Naive thymus-derived CD4-positive, alpha-beta T cell (primary cell): ENCODE measurements at regions of chr4 and their contacts with region 1.

Region 1: GRCh38 chr4:83217721-83218522 is 66.7 kb downstream of the COQ2 start:
- DNase-seq: peak in 8 of 9 donors; percentile 52 to 91 (median 84)
- ATAC-seq: peak; percentile 95
- H3K4me3 ChIP-seq: peak overlapping the region; percentile 23
- H3K4me3 Mint-ChIP-seq: peak overlapping the region; percentile 57 to 84 (median 72)
- H3K27ac ChIP-seq: peak overlapping the region; percentile 78
- H3K27ac Mint-ChIP-seq: peak overlapping the region; percentile 88 to 96 (median 92)
- H3K4me1 ChIP-seq: peaks cover 65 to 77% of the 10 kb centered on the region in 2 donors
- H3K4me1 Mint-ChIP-seq: peaks cover 56 to 83% (median 74%) of the 10 kb centered on the region in 7 donors
- H3K27me3 ChIP-seq: no peaks in the 10 kb centered on the region
- H3K27me3 Mint-ChIP-seq: no peaks in the 10 kb centered on the region

Region 2: GRCh38 chr4:81913427-81913879 is 1304.5 kb before region 1 on chr4:
- CTCF ChIA-PET with region 1: no interaction called
- POLR2A ChIA-PET with region 1: no interaction called
- intact Hi-C with region 1: no loop called
- DNase-seq: peak; percentile 18 to 64 (median 58)
- ATAC-seq: peak; percentile 81
- H3K4me3 ChIP-seq: no peak overlapping the region
- H3K4me3 Mint-ChIP-seq: peak overlapping the region in 1 of 10 donors; percentile 4
- H3K27ac ChIP-seq: no peak overlapping the region
- H3K27ac Mint-ChIP-seq: no peak overlapping the region
- H3K4me1 ChIP-seq: no peaks in the 10 kb centered on the region
- H3K4me1 Mint-ChIP-seq: peaks cover 0 to 9% (median 8%) of the 10 kb centered on the region in 7 donors
- H3K27me3 ChIP-seq: no peaks in the 10 kb centered on the region
- H3K27me3 Mint-ChIP-seq: peaks cover 0 to 20% (median 7%) of the 10 kb centered on the region in 5 donors

Region 3: DNA sequence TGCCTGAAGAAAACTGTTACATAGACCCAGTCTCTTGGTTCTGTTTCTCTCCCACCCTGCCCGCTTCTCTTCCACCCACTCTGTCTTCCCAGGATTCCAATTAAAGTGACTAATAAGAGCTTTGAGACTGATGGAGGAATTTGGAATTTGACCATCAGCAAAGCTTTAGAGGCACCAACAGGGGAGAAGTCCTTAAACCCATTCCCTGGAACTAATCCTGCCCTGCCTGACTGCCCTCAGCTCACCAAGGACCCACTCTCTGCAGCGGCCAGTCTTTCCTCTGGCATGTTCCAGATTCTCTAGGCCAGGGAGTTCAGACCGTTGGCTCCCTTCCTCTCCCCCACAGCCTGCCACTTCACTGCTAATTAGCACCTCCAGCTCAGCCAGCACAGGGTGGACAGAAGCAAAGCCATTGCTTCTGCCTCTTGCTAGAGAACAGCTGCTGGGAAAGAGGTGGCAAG is 443.2 kb before region 1 on chr4:
- CTCF ChIA-PET with region 1: no interaction called
- POLR2A ChIA-PET with region 1: no interaction called
- intact Hi-C with region 1: no loop called
- DNase-seq: no peak
- ATAC-seq: no peak
- H3K4me3 ChIP-seq: no peak overlapping the region
- H3K4me3 Mint-ChIP-seq: no peak overlapping the region
- H3K27ac ChIP-seq: no peak overlapping the region
- H3K27ac Mint-ChIP-seq: no peak overlapping the region
- H3K4me1 ChIP-seq: no peaks in the 10 kb centered on the region
- H3K4me1 Mint-ChIP-seq: no peaks in the 10 kb centered on the region
- H3K27me3 ChIP-seq: no peaks in the 10 kb centered on the region
- H3K27me3 Mint-ChIP-seq: peaks cover 0 to 14% (median 6%) of the 10 kb centered on the region in 5 donors

Region 4: GRCh38 chr4:83034630-83035494 is 183.1 kb before region 1 on chr4 and contains the start of gene COPS4:
- CTCF ChIA-PET with region 1: no interaction called
- POLR2A ChIA-PET with region 1: no interaction called
- intact Hi-C with region 1: loop called in 1 of 2 experiments (anchors 1 kb)
- DNase-seq: peak; percentile 77 to 98 (median 97)
- ATAC-seq: peak; percentile 99
- H3K4me3 ChIP-seq: peak within 1 kb of the TSS; percentile 98
- H3K4me3 Mint-ChIP-seq: peak within 1 kb of the TSS; percentile 92 to 100 (median 98)
- H3K27ac ChIP-seq: peak within 1 kb of the TSS; percentile 94
- H3K27ac Mint-ChIP-seq: peak within 1 kb of the TSS; percentile 94 to 100 (median 97)
- H3K4me1 ChIP-seq: peaks cover 4 to 19% of the 10 kb centered on the region in 2 donors
- H3K4me1 Mint-ChIP-seq: peaks cover 19 to 44% (median 35%) of the 10 kb centered on the region in 7 donors
- H3K27me3 ChIP-seq: no peaks in the 10 kb centered on the region
- H3K27me3 Mint-ChIP-seq: no peaks in the 10 kb centered on the region
- total RNA-seq, gene COPS4: 23.5 to 32.8 (median 24.7) TPM

Region 5: DNA sequence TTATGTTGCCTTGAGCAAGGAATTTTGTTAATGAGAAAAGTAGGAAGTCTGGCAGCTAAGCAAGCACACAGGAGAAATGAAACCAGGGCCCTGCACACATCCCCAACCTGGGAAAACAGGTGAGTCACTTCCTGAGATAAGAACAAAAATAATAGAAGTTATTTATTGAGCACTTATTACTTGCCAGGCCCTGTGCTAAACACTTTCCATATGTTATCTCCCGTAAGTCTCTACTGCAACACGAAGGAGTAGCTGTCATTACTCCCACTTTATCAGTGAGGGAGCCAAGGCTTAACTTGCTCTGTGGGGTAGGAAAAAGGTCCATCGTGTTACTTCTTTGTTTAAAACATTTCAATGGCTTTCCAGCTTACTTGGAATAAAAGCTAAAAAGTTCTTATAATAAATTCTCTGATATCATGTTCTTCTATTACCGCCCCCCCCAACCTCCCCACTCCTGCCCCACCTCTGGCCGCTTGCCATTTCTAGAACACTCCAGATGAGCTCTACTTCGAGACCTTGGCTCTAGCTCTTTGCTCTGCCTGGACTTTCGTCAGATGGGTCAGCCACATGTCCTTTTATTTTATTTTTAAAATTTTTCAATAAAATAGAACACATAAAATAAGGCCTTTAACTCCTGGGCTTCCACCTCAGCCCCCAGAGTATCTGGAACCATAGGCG is 67.1 kb before region 1 on chr4:
- CTCF ChIA-PET with region 1: no interaction called
- POLR2A ChIA-PET with region 1: no interaction called
- intact Hi-C with region 1: loop called in 1 of 2 experiments (anchors 5 kb)
- DNase-seq: no peak
- ATAC-seq: no peak
- H3K4me3 ChIP-seq: no peak overlapping the region
- H3K4me3 Mint-ChIP-seq: no peak overlapping the region
- H3K27ac ChIP-seq: no peak overlapping the region
- H3K27ac Mint-ChIP-seq: no peak overlapping the region
- H3K4me1 ChIP-seq: peaks cover 0 to 10% of the 10 kb centered on the region in 2 donors
- H3K4me1 Mint-ChIP-seq: peaks cover 9 to 44% (median 30%) of the 10 kb centered on the region in 7 donors
- H3K27me3 ChIP-seq: no peaks in the 10 kb centered on the region
- H3K27me3 Mint-ChIP-seq: peaks cover 0 to 17% (median 0%) of the 10 kb centered on the region in 5 donors

Region 6: GRCh38 chr4:83231620-83232076 is 13.7 kb after region 1 on chr4:
- CTCF ChIA-PET with region 1: interaction called, 6 read pairs
- POLR2A ChIA-PET with region 1: interaction called, 26 read pairs
- intact Hi-C with region 1: loop called (anchors 1 kb)
- DNase-seq: no peak
- ATAC-seq: peak; percentile 78
- H3K4me3 ChIP-seq: no peak overlapping the region
- H3K4me3 Mint-ChIP-seq: peak overlapping the region in 7 of 10 donors; percentile 13 to 60 (median 45)
- H3K27ac ChIP-seq: no peak overlapping the region
- H3K27ac Mint-ChIP-seq: peak overlapping the region; percentile 50 to 86 (median 72)
- H3K4me1 ChIP-seq: peaks cover 29 to 34% of the 10 kb centered on the region in 2 donors
- H3K4me1 Mint-ChIP-seq: peaks cover 44 to 62% (median 49%) of the 10 kb centered on the region in 7 donors
- H3K27me3 ChIP-seq: no peaks in the 10 kb centered on the region
- H3K27me3 Mint-ChIP-seq: peaks cover 0 to 32% (median 0%) of the 10 kb centered on the region in 5 donors

Region 7: GRCh38 chr4:83252782-83253405 is 35.0 kb after region 1 on chr4:
- CTCF ChIA-PET with region 1: interaction called, 15 read pairs
- POLR2A ChIA-PET with region 1: interaction called, 18 read pairs
- intact Hi-C with region 1: loop called (anchors 1 kb)
- DNase-seq: peak; percentile 36 to 85 (median 79)
- ATAC-seq: peak; percentile 90
- H3K4me3 ChIP-seq: no peak overlapping the region
- H3K4me3 Mint-ChIP-seq: no peak overlapping the region
- H3K27ac ChIP-seq: no peak overlapping the region
- H3K27ac Mint-ChIP-seq: peak overlapping the region in 8 of 9 donors; percentile 8 to 88 (median 72)
- H3K4me1 ChIP-seq: peaks cover 10 to 12% of the 10 kb centered on the region in 2 donors
- H3K4me1 Mint-ChIP-seq: peaks cover 19 to 36% (median 26%) of the 10 kb centered on the region in 7 donors
- H3K27me3 ChIP-seq: no peaks in the 10 kb centered on the region
- H3K27me3 Mint-ChIP-seq: peaks cover 0 to 5% (median 0%) of the 10 kb centered on the region in 5 donors

Region 8: DNA sequence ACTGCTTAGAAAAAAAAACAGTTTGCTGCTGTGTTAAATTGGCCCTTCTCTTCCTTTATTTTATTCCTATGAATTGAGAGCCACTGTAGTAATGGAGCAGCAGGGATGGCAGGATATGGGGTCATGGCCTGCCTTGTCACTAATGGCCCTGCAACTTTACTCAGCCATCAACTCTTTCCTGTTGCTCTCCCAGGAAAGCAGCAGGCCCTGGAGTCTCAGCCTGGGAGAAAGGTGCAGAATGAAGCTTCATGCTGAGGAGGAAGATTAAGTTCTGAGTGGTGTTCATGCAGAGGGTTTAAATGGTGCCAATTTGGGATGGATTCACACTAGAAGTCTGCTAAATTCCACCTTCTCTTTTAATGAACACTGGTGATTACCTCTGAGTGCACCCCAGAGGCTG is 603.6 kb after region 1 on chr4:
- CTCF ChIA-PET with region 1: no interaction called
- POLR2A ChIA-PET with region 1: no interaction called
- intact Hi-C with region 1: no loop called
- DNase-seq: no peak
- ATAC-seq: no peak
- H3K4me3 ChIP-seq: no peak overlapping the region
- H3K4me3 Mint-ChIP-seq: no peak overlapping the region
- H3K27ac ChIP-seq: no peak overlapping the region
- H3K27ac Mint-ChIP-seq: no peak overlapping the region
- H3K4me1 ChIP-seq: no peaks in the 10 kb centered on the region
- H3K4me1 Mint-ChIP-seq: no peaks in the 10 kb centered on the region
- H3K27me3 ChIP-seq: no peaks in the 10 kb centered on the region
- H3K27me3 Mint-ChIP-seq: peaks cover 0 to 15% (median 5%) of the 10 kb centered on the region in 5 donors